WTC11 (cell line): ENCODE measurements at regions of chr5 and their contacts with region 1.

Region 1: GRCh38 chr5:96662725-96663513 is 743 bp downstream of the CAST start:
- DNase-seq: peak; percentile 91
- ATAC-seq: peak; percentile 80
- H3K4me3 Mint-ChIP-seq: peak overlapping the region; percentile 94
- H3K27ac Mint-ChIP-seq: peak overlapping the region; percentile 93; the same call in 1 of the 2 replicates
- H3K4me1 Mint-ChIP-seq: peaks cover 17% of the 10 kb centered on the region
- H3K27me3 Mint-ChIP-seq: peaks cover 52% of the 10 kb centered on the region
- CTCF ChIP-seq: no peak

Region 2: DNA sequence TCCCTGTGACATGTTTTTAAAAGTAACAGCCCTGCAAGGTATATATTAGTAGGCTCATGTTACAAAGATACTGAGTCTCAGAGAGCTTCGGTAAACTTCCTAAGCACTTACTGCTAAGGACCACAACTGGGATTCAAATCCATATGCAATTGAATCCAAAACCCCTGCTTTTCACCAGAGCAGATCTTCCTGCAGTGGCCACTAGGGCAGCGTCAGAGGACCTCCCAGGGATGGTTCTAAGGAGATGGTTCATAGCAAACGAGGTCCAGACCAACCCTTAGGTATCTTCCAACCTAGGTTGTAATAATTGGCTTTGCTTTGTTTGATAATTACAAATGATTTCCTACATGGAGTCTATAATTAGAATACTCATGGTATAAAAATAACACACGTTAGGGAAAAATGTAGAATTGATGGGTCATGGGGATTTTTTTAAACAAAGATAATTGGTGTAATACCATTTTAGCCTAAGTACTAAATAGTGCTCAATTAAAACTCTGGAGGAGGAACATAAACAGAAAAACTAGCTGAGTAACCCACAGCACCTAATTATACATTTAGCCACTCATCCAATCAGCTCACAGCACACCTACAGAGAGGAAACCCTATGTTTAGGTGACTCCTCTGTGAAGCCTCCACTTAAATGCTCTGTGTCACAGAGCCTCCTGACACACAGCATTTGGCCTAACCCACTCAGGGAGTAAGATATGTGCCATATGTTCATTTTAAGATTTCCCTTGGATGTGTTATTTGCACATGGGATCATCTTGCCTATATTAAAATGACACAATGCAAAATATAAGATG is 10.8 kb before region 1 on chr5:
- CTCF ChIA-PET with region 1: interaction called, 19 read pairs
- POLR2A ChIA-PET with region 1: no interaction called
- DNase-seq: peak; percentile 48
- ATAC-seq: peak; percentile 89
- H3K4me3 Mint-ChIP-seq: no peak overlapping the region
- H3K27ac Mint-ChIP-seq: no peak overlapping the region
- H3K4me1 Mint-ChIP-seq: peaks cover 18% of the 10 kb centered on the region
- H3K27me3 Mint-ChIP-seq: peaks cover 1% of the 10 kb centered on the region; the same call in 1 of the 2 replicates
- CTCF ChIP-seq: no peak

Region 3: DNA sequence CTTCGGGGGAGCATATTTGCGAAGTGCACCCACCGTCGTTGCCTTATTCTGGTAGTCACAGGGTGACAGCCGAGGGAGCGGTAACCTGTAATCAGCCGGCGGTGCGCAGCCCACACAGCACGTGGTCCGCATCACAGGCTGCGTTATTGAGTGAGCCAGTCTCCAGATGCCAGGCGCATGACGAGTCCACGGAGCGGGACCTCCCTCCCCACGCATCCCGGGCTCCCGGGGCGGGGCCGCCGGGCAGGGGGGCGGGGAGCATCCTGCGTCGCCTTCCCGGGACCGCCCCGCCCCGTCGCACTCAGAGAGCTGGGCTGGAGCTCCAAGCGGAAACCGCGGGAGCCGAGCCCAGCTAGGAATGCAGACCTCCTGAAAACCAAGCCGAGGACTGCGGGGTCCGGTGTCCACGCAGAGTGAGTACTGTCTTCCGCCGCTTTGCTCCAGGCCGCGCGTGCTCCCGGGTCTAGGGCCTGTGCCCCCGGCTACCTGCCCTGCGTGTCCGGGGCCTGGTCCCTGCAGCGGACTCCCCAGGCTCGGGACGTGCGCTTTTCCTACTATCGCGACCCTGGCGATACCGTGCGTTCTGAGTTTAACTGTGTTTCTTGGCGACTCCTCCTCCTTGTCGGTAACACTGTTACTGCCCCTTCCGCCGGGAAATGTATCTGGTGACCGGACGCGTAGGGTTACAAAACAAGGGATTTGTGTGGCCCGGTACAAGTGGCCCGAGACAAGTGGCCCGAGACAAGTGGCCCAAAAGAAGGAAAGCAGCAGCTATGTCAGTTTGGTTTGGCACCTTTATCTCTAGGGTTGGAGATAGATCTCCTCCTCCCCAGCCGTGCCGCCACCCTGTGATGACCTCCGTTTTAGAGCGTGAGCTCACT is 39.8 kb after region 1 on chr5:
- CTCF ChIA-PET with region 1: no interaction called
- POLR2A ChIA-PET with region 1: interaction called, 11 read pairs
- DNase-seq: peak; percentile 71
- ATAC-seq: peak; percentile 85
- H3K4me3 Mint-ChIP-seq: peak overlapping the region; percentile 89
- H3K27ac Mint-ChIP-seq: peak overlapping the region; percentile 85
- H3K4me1 Mint-ChIP-seq: peaks cover 25% of the 10 kb centered on the region
- H3K27me3 Mint-ChIP-seq: peaks cover 8% of the 10 kb centered on the region; the same call in 1 of the 2 replicates
- CTCF ChIP-seq: no peak